ENCODE measurements at regions of chr5 and their contacts with region 1.

Region 1: GRCh38 chr5:157312492-157312891 is 46.6 kb downstream of the CYFIP2 start:
- DNase-seq: no peak
- ATAC-seq: peak; percentile 66

Region 2: GRCh38 chr5:156991714-156992113 is 320.8 kb before region 1 on chr5:
- intact Hi-C with region 1: no loop called
- DNase-seq: peak; percentile 25
- ATAC-seq: no peak

Region 3: GRCh38 chr5:157148734-157149615 is 163.5 kb before region 1 on chr5:
- intact Hi-C with region 1: loop called (anchors 5 kb)
- DNase-seq: no peak
- ATAC-seq: peak; percentile 78

Region 4: GRCh38 chr5:157259699-157260098 is 52.8 kb before region 1 on chr5:
- intact Hi-C with region 1: loop called (anchors 5 kb)
- DNase-seq: no peak
- ATAC-seq: no peak

Measured in left ventricle myocardium superior (tissue), 1 donor.